GM10248 (cell line): ENCODE measurements at regions of chr12 and their contacts with region 1.

Region 1: DNA sequence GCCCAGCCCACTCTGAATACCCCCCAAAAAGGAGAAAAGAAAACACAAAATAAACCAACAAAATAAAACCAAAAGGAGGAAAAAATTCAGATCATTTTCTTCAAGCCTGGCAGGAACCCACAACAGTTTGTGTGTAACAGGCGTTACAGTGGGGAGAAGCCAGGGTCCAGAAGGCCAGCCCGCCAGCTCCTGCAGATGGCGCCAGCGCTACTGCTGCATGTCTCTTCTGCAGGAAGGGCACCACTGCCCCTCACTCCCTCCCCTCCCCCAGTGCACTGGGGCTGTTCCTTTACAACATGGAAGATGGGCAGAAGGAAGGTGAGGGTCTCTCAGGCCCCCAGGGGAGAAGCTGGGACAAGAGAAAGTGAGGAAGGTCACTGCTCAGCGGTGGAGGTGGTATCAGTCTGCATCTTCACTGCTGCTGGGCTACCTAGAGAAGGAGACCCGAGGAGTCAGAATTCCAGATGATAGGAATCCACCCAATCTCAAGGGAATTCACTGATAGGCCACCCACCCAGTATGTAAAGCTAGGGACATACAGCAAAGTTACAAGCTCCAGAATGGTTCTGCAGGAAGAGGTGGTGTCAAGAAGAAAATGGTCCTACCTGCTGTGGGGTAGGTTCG is 2.3 kb upstream of the NOP2 start:
- DNase-seq: peak; percentile 60
- CTCF ChIP-seq: peak; percentile 77

Region 2: GRCh38 chr12:6554168-6555017 is 16.0 kb before region 1 on chr12:
- CTCF ChIA-PET with region 1: interaction called, 58 read pairs
- POLR2A ChIA-PET with region 1: interaction called, 3 read pairs
- DNase-seq: peak; percentile 88
- CTCF ChIP-seq: peak; percentile 77

Region 3: GRCh38 chr12:6592087-6592486 is 21.7 kb after region 1 on chr12:
- CTCF ChIA-PET with region 1: interaction called, 10 read pairs
- POLR2A ChIA-PET with region 1: interaction called, 5 read pairs
- DNase-seq: no peak
- CTCF ChIP-seq: no peak

Region 4: GRCh38 chr12:6606293-6607131 is 36.1 kb after region 1 on chr12:
- CTCF ChIA-PET with region 1: interaction called, 11 read pairs
- POLR2A ChIA-PET with region 1: no interaction called
- DNase-seq: peak; percentile 68
- CTCF ChIP-seq: no peak